B cell (primary cell): ENCODE measurements at regions of chr12 and their contacts with region 1.

Region 1: DNA sequence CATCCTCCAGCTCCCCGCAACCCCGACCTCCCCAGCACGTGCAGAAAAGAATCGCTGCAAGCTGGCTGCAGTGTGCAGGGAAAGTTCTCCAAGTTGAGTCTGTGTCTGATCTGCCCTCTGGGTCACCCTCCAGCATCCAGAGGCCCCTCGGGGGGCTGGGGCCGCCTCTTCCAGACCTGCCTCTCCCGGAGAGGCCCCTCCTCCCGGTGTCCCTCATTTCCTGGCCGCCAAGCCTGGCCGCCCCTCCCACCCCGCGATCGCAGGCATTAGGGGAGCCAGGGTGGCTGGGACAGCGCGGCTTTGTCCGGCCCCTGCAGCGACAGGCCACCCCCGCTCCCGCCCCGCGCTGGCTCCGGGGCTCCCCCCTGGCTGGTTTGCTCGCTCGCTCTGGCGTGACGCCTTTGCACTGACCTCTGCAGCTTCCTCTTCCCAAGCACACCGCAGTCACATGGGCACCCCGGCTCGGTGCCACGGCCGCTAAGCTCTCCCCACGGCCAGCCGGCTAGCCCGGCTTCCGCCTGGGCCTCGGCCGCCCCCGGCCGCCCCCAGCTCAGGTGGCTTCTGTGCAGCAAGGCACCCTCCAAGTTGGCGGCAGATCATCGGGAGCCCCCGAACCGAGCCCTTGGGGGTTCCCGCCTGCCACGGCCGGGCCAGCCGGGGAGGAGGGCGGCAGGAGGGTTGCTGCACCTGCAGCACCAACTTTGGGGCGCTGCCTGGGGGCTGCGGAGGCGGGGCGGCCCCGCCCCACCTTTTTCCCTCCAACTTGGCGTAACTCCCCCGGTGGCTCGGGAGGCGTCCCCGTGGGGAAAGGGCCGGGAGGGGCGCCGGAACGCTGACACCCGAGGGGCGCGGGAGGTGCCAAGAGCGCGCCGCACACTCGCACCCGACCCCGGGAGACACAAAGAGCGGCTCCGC is 43.7 kb downstream of the KDM2B start:
- DNase-seq: peak; percentile 92
- ATAC-seq: peak; percentile 49
- H3K4me3 ChIP-seq: peak overlapping the region; percentile 8 to 85 (median 66)
- H3K4me3 Mint-ChIP-seq: peak overlapping the region; percentile 94
- H3K27ac ChIP-seq: peak overlapping the region; percentile 92 to 97
- H3K27ac Mint-ChIP-seq: peak overlapping the region; percentile 93
- H3K4me1 ChIP-seq: peaks cover 50 to 56% of the 10 kb centered on the region in 2 donors
- H3K4me1 Mint-ChIP-seq: peaks cover 53% of the 10 kb centered on the region
- H3K27me3 ChIP-seq: no peaks in the 10 kb centered on the region
- H3K27me3 Mint-ChIP-seq: no peaks in the 10 kb centered on the region
- CTCF ChIP-seq: no peak

Region 2: DNA sequence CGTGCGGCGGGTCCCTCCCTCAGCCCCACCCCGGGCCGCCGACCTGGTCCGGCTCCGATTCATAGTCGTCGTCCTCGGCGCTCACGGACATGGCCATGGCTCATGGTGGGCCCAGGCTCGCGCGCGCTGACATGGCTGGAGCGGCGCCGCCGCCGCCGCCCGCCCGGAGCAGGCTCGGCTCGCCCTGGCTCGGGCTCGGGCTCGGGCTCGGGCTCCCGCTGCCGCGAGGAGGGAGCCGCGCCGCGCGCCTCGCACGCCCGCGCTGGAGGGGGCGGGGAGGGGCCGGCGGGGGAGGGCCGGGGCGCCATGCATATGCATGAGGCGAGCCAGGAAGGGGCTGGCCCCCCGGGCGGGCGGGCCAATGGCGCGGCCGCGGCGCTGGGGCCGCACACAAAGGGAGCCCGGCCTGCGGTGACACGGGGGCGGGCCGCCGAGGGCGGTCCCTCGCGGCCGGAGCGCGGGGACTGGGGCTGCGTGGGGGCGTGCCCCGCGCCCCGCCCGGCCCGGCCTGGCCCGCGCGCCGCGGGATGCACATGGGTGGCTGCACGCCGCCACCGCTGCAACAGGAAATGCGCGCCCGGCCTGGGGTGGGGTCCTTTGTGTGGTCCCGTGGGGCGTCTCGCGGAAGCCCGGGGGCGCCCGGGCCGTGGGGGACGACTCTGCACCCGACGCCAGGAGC is 69.9 kb before region 1 on chr12:
- CTCF ChIA-PET with region 1: interaction called, 5 read pairs
- POLR2A ChIA-PET with region 1: interaction called, 5 read pairs
- intact Hi-C with region 1: loop called (anchors 1 kb)
- DNase-seq: peak; percentile 94
- ATAC-seq: peak; percentile 85
- H3K4me3 ChIP-seq: peak overlapping the region in 4 of 5 experiments; percentile 56 to 82 (median 76)
- H3K4me3 Mint-ChIP-seq: peak overlapping the region; percentile 49
- H3K27ac ChIP-seq: peak overlapping the region; percentile 62 to 82
- H3K27ac Mint-ChIP-seq: peak overlapping the region; percentile 86
- H3K4me1 ChIP-seq: peaks cover 23 to 49% of the 10 kb centered on the region in 2 donors
- H3K4me1 Mint-ChIP-seq: peaks cover 59% of the 10 kb centered on the region
- H3K27me3 ChIP-seq: no peaks in the 10 kb centered on the region
- H3K27me3 Mint-ChIP-seq: no peaks in the 10 kb centered on the region
- CTCF ChIP-seq: no peak

Region 3: GRCh38 chr12:121499929-121500793 is 37.0 kb before region 1 on chr12:
- CTCF ChIA-PET with region 1: interaction called, 29 read pairs
- POLR2A ChIA-PET with region 1: interaction called, 7 read pairs
- intact Hi-C with region 1: loop called (anchors 1 kb)
- DNase-seq: peak; percentile 82
- ATAC-seq: peak; percentile 91
- H3K4me3 ChIP-seq: no peak overlapping the region
- H3K4me3 Mint-ChIP-seq: no peak overlapping the region
- H3K27ac ChIP-seq: no peak overlapping the region
- H3K27ac Mint-ChIP-seq: no peak overlapping the region
- H3K4me1 ChIP-seq: peaks cover 10 to 19% of the 10 kb centered on the region in 2 donors
- H3K4me1 Mint-ChIP-seq: peaks cover 16% of the 10 kb centered on the region
- H3K27me3 ChIP-seq: no peaks in the 10 kb centered on the region
- H3K27me3 Mint-ChIP-seq: no peaks in the 10 kb centered on the region
- CTCF ChIP-seq: peak; percentile 99

Region 4: GRCh38 chr12:121522971-121523370 is 14.2 kb before region 1 on chr12:
- CTCF ChIA-PET with region 1: interaction called, 3 read pairs
- POLR2A ChIA-PET with region 1: interaction called, 12 read pairs
- intact Hi-C with region 1: no loop called
- DNase-seq: peak; percentile 44
- ATAC-seq: peak; percentile 65
- H3K4me3 ChIP-seq: no peak overlapping the region
- H3K4me3 Mint-ChIP-seq: peak overlapping the region; percentile 86
- H3K27ac ChIP-seq: no peak overlapping the region
- H3K27ac Mint-ChIP-seq: peak overlapping the region; percentile 77
- H3K4me1 ChIP-seq: peaks cover 9 to 36% of the 10 kb centered on the region in 2 donors
- H3K4me1 Mint-ChIP-seq: peaks cover 37% of the 10 kb centered on the region
- H3K27me3 ChIP-seq: no peaks in the 10 kb centered on the region
- H3K27me3 Mint-ChIP-seq: no peaks in the 10 kb centered on the region
- CTCF ChIP-seq: no peak

Region 5: GRCh38 chr12:121579981-121580868 is 43.1 kb after region 1 on chr12:
- CTCF ChIA-PET with region 1: interaction called, 9 read pairs
- POLR2A ChIA-PET with region 1: interaction called, 52 read pairs
- intact Hi-C with region 1: no loop called
- DNase-seq: peak; percentile 79
- ATAC-seq: peak; percentile 55
- H3K4me3 ChIP-seq: peak overlapping the region; percentile 57 to 93 (median 65)
- H3K4me3 Mint-ChIP-seq: peak overlapping the region; percentile 94
- H3K27ac ChIP-seq: peak overlapping the region; percentile 69 to 77
- H3K27ac Mint-ChIP-seq: peak overlapping the region; percentile 94
- H3K4me1 ChIP-seq: peaks cover 23 to 47% of the 10 kb centered on the region in 2 donors
- H3K4me1 Mint-ChIP-seq: peaks cover 34% of the 10 kb centered on the region
- H3K27me3 ChIP-seq: no peaks in the 10 kb centered on the region
- H3K27me3 Mint-ChIP-seq: no peaks in the 10 kb centered on the region
- CTCF ChIP-seq: no peak

Region 6: GRCh38 chr12:121626087-121626852 is 89.1 kb after region 1 on chr12 and contains the start of gene ORAI1:
- CTCF ChIA-PET with region 1: interaction called, 9 read pairs
- POLR2A ChIA-PET with region 1: interaction called, 11 read pairs
- intact Hi-C with region 1: loop called (anchors 1 kb)
- DNase-seq: peak; percentile 97
- ATAC-seq: peak; percentile 76
- H3K4me3 ChIP-seq: peak within 1 kb of the TSS; percentile 61 to 93 (median 82)
- H3K4me3 Mint-ChIP-seq: peak within 1 kb of the TSS; percentile 96
- H3K27ac ChIP-seq: peak within 1 kb of the TSS; percentile 87 to 91
- H3K27ac Mint-ChIP-seq: peak within 1 kb of the TSS; percentile 96
- H3K4me1 ChIP-seq: peaks cover 40 to 50% of the 10 kb centered on the region in 2 donors
- H3K4me1 Mint-ChIP-seq: peaks cover 48% of the 10 kb centered on the region
- H3K27me3 ChIP-seq: no peaks in the 10 kb centered on the region
- H3K27me3 Mint-ChIP-seq: no peaks in the 10 kb centered on the region
- CTCF ChIP-seq: no peak
- total RNA-seq, gene ORAI1: 43.2 and 44.2 TPM in 2 replicates

Region 7: DNA sequence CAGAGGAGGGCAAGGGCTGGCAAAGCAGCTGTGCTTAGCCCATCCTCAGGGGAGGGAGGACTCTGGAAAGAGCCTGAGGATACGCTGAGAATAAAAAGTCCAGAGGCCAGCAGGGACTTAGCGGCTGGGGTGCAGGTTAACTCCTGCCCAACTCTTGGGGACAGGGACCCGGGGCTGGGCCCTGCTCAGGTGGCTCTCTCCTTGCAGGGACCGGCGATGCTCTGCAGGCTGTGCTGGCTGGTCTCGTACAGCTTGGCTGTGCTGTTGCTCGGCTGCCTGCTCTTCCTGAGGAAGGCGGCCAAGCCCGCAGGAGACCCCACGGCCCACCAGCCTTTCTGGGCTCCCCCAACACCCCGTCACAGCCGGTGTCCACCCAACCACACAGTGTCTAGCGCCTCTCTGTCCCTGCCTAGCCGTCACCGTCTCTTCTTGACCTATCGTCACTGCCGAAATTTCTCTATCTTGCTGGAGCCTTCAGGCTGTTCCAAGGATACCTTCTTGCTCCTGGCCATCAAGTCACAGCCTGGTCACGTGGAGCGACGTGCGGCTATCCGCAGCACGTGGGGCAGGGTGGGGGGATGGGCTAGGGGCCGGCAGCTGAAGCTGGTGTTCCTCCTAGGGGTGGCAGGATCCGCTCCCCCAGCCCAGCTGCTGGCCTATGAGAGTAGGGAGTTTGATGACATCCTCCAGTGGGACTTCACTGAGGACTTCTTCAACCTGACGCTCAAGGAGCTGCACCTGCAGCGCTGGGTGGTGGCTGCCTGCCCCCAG is 669.1 kb after region 1 on chr12:
- CTCF ChIA-PET with region 1: no interaction called
- POLR2A ChIA-PET with region 1: interaction called, 14 read pairs
- intact Hi-C with region 1: no loop called
- DNase-seq: no peak
- ATAC-seq: no peak
- H3K4me3 ChIP-seq: no peak overlapping the region
- H3K4me3 Mint-ChIP-seq: no peak overlapping the region
- H3K27ac ChIP-seq: no peak overlapping the region
- H3K27ac Mint-ChIP-seq: no peak overlapping the region
- H3K4me1 ChIP-seq: peaks cover 13 to 14% of the 10 kb centered on the region in 2 donors
- H3K4me1 Mint-ChIP-seq: peaks cover 12% of the 10 kb centered on the region
- H3K27me3 ChIP-seq: peaks cover 0 to 34% (median 14%) of the 10 kb centered on the region in 4 experiments
- H3K27me3 Mint-ChIP-seq: peaks cover 16% of the 10 kb centered on the region
- CTCF ChIP-seq: no peak